ENCODE measurements at regions of chr4 and their contacts with region 1.

Region 1: GRCh38 chr4:83455281-83456129 is at the starts of genes HELQ and MRPS18C:
- DNase-seq: peak; percentile 99
- H3K4me3 ChIP-seq: peak within 1 kb of the TSS; percentile 59 to 94 (median 75)
- H3K27ac ChIP-seq: peak within 1 kb of the TSS; percentile 88
- H3K4me1 ChIP-seq: peaks cover 20% of the 10 kb centered on the region
- H3K27me3 ChIP-seq: no peaks in the 10 kb centered on the region
- CTCF ChIP-seq: no peak
- POLR2A ChIP-seq: peak; percentile 93
- total RNA-seq, gene HELQ: 11.0 and 11.1 TPM in 2 replicates
- total RNA-seq, gene MRPS18C: 58.4 and 64.8 TPM in 2 replicates

Region 2: DNA sequence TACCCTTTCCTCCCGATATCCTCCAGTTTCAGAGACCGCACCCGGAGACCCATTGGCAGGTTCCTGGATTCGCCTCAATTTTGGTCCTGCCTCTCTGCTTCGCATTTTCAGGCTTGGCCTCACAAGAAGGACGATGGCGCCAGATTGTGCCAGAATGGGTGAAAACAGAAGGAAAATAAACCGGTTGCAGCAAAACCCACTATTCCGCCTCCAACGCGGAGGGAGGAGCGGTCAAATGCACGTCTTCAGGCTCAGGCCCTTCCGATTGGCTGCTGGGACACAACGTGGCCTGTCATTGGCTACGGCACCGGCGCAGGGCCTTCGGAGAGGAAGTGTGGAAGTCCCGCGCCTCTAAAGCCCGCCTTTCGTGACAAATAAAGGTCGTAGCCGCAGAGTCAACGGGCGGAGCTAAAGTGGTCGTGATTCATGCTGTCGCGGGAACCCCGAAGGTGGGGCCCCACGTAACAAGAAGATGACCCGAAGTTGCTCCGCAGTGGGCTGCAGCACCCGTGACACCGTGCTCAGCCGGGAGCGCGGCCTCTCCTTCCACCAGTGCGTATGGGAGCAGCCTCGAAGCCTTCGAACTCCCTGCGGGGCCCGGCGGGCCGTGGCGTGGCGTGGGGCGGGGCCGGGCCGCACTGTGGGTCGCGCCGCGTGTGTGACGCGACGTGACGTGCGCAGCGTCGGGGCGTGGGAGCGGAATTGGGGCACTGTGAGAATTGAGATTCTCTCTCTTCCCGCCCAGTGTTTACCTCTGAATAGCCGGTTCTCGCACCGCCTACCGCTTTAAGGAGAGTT is 555.0 kb before region 1 on chr4 and contains the start of gene THAP9:
- CTCF ChIA-PET with region 1: no interaction called
- POLR2A ChIA-PET with region 1: no interaction called
- dilution Hi-C with region 1: no loop called
- intact Hi-C with region 1: loop called (anchors 2 kb)
- DNase-seq: peak; percentile 100
- H3K4me3 ChIP-seq: peak within 1 kb of the TSS; percentile 71 to 92 (median 90)
- H3K27ac ChIP-seq: peak within 1 kb of the TSS; percentile 96
- H3K4me1 ChIP-seq: peaks cover 18% of the 10 kb centered on the region
- H3K27me3 ChIP-seq: no peaks in the 10 kb centered on the region
- CTCF ChIP-seq: no peak
- POLR2A ChIP-seq: peak; percentile 75
- total RNA-seq, gene THAP9: 1.7 and 3.2 TPM in 2 replicates

Region 3: DNA sequence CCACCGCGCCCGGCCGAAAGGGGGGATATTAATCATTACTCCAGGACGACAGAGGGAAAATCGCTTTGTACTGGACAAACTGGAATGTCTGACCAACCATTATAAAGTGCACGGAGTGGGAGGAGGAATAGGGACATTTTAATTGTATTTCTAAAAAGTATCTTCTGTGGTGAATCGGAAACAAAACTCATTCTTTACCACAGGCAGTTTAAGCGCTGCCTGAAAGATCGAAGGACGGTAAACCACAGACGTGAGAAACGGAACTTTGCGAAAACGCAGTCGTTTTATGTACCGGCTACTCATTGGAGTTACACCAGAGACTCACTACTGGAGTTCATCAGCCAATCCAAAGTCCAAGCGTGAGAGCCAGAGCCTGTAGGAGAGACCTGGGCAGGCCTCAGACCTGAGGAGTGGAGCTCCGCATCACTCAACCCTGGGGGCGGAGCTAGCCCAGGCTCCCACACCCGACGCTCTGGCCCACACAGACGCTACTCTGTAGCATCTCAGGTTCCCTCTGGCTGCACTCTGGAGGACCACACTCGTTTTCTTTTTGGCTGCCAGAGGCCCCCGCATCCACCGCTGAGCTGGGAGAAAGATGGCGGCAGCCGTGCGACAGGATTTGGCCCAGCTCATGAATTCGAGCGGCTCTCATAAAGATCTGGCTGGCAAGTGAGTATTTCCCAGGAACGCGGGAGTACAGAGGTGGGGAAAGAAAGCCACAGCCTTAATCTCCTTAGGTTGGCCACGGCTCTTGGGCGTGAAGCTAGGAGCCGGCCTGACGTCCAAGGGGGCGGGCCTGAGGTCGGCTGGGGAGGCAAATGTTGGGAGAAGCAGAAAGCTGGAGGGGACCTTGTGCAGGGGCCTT is 420.6 kb before region 1 on chr4 and contains the start of gene COPS4:
- CTCF ChIA-PET with region 1: no interaction called
- POLR2A ChIA-PET with region 1: no interaction called
- dilution Hi-C with region 1: no loop called
- intact Hi-C with region 1: loop called (anchors 10 kb)
- DNase-seq: peak; percentile 100
- H3K4me3 ChIP-seq: peak within 1 kb of the TSS; percentile 78 to 94 (median 91)
- H3K27ac ChIP-seq: peak within 1 kb of the TSS; percentile 88
- H3K4me1 ChIP-seq: peaks cover 28% of the 10 kb centered on the region
- H3K27me3 ChIP-seq: peaks cover 0 to 3% of the 10 kb centered on the region in 2 experiments
- CTCF ChIP-seq: peak in 1 of 2 donors; percentile 40
- POLR2A ChIP-seq: peak; percentile 88
- total RNA-seq, gene COPS4: 47.3 and 53.0 TPM in 2 replicates

Region 4: GRCh38 chr4:83334425-83335241 is 120.9 kb before region 1 on chr4 and contains the start of gene HPSE:
- CTCF ChIA-PET with region 1: interaction called, 3 read pairs
- POLR2A ChIA-PET with region 1: no interaction called
- dilution Hi-C with region 1: no loop called
- intact Hi-C with region 1: loop called (anchors 1 kb)
- DNase-seq: peak; percentile 56
- H3K4me3 ChIP-seq: peak within 1 kb of the TSS; percentile 40 to 49 (median 47)
- H3K27ac ChIP-seq: no peak within 1 kb of the TSS
- H3K4me1 ChIP-seq: peaks cover 13% of the 10 kb centered on the region
- H3K27me3 ChIP-seq: no peaks in the 10 kb centered on the region
- CTCF ChIP-seq: no peak
- POLR2A ChIP-seq: no peak
- total RNA-seq, gene HPSE: 6.6 and 7.0 TPM in 2 replicates

Region 5: DNA sequence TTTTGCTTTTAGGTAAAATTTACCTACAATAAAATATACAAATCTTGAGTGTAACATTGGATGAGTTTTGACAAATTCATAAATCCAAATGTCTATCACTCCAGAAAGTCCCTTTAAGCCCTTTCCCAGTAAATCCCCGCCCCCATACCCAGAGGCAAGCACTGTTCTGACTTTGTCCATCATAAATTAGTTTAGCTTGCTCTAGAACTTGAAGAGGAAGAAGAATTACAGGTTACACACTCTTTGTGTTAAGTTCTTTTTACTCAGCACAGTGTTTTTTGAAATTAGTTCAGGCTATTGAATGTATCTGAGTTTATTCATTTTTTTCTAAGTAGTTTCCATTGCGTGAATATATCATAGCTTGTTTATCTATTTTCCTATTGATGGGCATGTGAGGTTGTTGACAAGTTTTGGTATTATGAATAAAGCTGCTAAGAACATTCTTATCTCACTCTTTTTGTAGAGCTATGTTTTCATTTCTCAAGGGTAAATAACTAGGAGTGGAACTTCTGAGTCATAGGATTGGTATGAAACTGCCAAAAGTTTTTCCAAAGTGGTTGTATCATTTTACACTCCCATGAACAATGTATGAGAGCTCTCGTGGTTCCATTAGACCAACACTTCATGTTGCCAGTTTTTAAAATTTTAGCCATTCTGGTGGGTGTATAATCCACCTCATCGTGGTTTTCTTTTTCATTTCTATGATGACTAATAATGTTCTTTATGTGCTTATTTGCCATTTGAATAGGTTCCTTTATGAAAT is 98.4 kb before region 1 on chr4:
- CTCF ChIA-PET with region 1: interaction called, 26 read pairs
- POLR2A ChIA-PET with region 1: no interaction called
- dilution Hi-C with region 1: no loop called
- intact Hi-C with region 1: loop called (anchors 1 kb)
- DNase-seq: peak; percentile 95
- H3K4me3 ChIP-seq: no peak overlapping the region
- H3K27ac ChIP-seq: peak overlapping the region; percentile 92
- H3K4me1 ChIP-seq: peaks cover 27% of the 10 kb centered on the region
- H3K27me3 ChIP-seq: no peaks in the 10 kb centered on the region
- CTCF ChIP-seq: no peak
- POLR2A ChIP-seq: no peak

Region 6: DNA sequence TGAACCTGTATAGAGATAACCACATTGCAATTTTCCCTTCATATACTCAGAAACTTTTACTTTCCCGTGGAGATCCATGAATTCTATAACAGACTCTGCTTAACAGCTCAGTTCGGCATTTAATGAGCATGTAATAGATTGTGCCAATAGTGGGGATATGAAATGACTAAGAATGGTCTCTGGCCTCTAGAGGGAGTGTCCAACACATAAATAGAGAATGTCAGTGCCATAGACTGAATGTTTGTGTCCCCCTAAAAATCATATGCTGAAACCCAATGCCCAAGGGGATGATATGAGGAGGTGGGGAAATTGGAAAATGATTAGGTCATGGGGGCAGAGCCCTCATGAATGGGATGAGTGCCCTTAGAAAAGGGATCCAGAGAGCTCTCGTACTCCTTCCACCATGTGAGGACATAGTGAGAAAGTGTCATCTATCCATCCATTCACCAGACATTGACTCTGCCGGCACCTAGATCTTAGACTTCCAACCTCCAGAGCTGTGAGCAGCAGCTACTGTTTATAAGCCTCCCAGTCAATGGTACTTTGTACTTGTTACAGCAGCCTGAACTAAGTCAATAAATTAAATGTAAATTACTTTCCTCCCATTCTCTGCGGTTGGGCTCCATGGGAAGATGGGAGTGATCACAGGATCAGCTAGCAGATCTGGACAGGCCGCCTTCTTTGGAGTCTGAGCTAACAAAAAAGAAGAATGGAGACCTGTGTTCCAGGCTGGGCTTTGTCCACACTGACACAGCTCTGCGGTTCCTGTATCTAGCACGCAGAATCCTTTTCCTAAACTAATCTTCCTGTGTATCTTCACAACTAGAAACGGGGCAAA is 92.8 kb before region 1 on chr4:
- CTCF ChIA-PET with region 1: interaction called, 26 read pairs
- POLR2A ChIA-PET with region 1: no interaction called
- dilution Hi-C with region 1: no loop called
- intact Hi-C with region 1: loop called (anchors 1 kb)
- DNase-seq: peak; percentile 61
- H3K4me3 ChIP-seq: no peak overlapping the region
- H3K27ac ChIP-seq: no peak overlapping the region
- H3K4me1 ChIP-seq: peaks cover 13% of the 10 kb centered on the region
- H3K27me3 ChIP-seq: no peaks in the 10 kb centered on the region
- CTCF ChIP-seq: peak; percentile 35 to 44
- POLR2A ChIP-seq: no peak

Region 7: DNA sequence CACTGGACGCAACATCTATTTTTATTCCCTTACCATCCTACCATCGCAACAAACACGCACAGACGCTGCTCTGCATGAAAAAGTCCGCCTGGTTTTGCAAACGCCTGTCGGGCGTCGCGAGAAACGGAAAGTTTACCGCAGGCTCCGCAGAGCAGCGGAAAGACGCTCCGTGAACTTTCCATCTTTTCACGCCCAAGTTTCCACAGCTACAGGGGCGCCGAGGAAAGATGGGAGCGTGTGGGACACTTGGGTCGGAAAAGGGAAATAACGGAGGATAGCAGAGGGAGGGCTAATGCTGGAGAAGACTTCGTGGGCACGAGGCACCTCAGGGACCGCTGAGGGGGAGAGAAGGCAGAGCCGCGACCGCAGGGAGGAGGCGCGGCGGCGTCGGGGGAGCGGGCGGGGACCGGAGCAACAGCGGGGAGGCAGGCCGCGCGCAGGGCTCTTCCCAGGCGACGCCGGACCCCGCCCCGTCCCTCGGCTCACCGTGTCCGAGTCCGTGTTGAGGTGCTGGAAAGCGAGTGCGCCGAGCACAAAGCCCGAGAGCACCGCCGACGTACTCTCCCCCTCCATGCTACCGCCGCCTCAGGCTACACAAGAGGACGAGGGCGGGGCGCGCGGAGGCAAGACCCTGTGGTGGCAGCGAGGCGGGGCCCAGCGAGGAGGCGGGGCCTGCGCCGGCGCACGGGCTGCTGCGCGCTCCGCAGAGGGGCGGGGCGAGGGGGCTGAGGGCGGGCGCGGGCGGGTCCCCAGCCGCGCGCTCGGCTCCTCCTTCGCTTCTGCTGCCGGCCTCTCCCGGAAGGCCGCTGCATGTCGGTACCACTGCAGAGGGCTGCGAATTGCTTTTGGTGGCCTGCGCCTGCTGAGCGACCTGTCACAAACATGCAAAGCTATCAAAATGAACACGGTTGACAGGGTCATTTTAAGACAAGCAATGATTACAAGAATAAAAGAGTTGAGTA is 29.3 kb after region 1 on chr4 and contains the start of gene ABRAXAS1:
- CTCF ChIA-PET with region 1: no interaction called
- POLR2A ChIA-PET with region 1: no interaction called
- dilution Hi-C with region 1: no loop called
- intact Hi-C with region 1: loop called (anchors 1 kb)
- DNase-seq: peak; percentile 96
- H3K4me3 ChIP-seq: peak within 1 kb of the TSS; percentile 62 to 85 (median 82)
- H3K27ac ChIP-seq: peak within 1 kb of the TSS; percentile 40
- H3K4me1 ChIP-seq: peaks cover 9% of the 10 kb centered on the region
- H3K27me3 ChIP-seq: no peaks in the 10 kb centered on the region
- CTCF ChIP-seq: no peak
- POLR2A ChIP-seq: peak; percentile 91
- total RNA-seq, gene ABRAXAS1: 14.0 and 16.7 TPM in 2 replicates